ENCODE measurements at regions of chr1 and their contacts with region 1.

Region 1: DNA sequence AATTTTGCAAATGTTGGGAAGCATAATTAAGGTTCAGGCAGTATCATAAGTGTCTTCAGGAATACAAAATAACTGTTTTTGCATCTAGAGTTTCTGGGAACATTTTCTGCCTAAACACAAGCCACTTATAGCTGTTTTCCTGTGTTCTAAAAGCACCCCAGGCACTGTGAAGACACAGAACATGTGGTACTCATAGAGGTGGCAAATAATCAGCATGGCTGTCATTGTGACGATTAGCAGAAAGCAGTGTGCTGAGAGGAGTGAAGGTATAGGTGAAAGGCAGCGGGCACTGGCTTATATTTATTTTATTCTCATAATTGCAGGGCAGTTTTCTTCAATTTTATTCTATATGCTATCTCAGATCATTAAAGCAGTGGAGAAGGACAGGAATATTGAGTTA is 119.6 kb downstream of the LRRC53 start:
- DNase-seq: peak in 2 of 5 donors; percentile 33 to 36
- ATAC-seq: peak; percentile 72 to 84 (median 81)
- H3K4me3 ChIP-seq: no peak overlapping the region
- H3K27ac ChIP-seq: peak overlapping the region in 10 of 12 donors; percentile 18 to 70 (median 60)
- H3K4me1 ChIP-seq: peaks cover 0 to 61% (median 26%) of the 10 kb centered on the region in 12 donors
- H3K27me3 ChIP-seq: no peaks in the 10 kb centered on the region
- CTCF ChIP-seq: no peak
- POLR2A ChIP-seq: no peak

Region 2: DNA sequence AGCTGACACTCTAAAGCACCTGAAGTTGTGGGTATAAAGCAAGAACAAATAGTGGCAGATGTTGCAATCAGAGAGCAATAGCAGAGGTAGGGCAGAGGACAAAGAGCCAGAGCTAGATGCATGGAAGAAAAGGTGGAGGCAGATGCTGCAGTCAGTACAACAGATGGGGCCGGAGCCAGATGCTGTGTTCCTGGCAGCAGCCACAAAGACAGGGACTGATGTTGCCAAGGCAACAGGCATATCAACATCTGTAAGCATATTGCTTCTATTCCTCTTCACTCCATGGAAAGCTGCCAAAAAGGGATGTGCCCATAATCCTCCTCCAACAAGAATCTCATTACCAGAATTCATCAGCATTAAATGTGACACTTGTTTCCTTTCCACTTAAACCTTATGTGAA is 49.6 kb before region 1 on chr1:
- intact Hi-C with region 1: loop called in 1 of 10 experiments (anchors 5 kb)
- DNase-seq: peak in 3 of 5 donors; percentile 24 to 42 (median 24)
- ATAC-seq: peak in 1 of 4 donors; percentile 20
- H3K4me3 ChIP-seq: no peak overlapping the region
- H3K27ac ChIP-seq: peak overlapping the region in 5 of 12 donors; percentile 15 to 81 (median 43)
- H3K4me1 ChIP-seq: peaks cover 0 to 25% (median 4%) of the 10 kb centered on the region in 12 donors
- H3K27me3 ChIP-seq: no peaks in the 10 kb centered on the region
- CTCF ChIP-seq: no peak
- POLR2A ChIP-seq: no peak

Region 3: DNA sequence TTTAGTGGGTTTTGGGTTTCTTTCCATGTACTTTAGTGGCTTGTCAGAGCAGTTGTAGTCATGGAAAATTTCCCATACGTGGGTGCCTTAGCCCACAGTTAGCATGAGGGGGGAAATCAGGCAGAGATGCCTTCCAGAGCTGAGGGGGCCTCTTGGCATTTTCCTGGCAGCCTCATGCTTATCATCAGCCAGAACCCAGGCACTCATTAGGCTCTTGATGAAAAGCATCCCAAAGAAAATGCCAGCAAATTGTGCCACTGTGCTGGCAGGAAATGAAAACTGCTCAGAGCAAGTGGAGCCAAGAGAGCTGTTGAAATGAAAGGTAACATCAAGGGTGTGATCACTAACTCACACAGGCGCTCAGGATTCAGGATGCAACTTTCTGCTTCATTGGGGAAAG is 29.6 kb before region 1 on chr1:
- intact Hi-C with region 1: loop called in 1 of 10 experiments (anchors 2 kb)
- DNase-seq: peak in 4 of 5 donors; percentile 66 to 88 (median 76)
- ATAC-seq: peak; percentile 93 to 97 (median 95)
- H3K4me3 ChIP-seq: no peak overlapping the region
- H3K27ac ChIP-seq: peak overlapping the region in 11 of 12 donors; percentile 33 to 92 (median 75)
- H3K4me1 ChIP-seq: peaks cover 0 to 15% (median 1%) of the 10 kb centered on the region in 12 donors
- H3K27me3 ChIP-seq: no peaks in the 10 kb centered on the region
- CTCF ChIP-seq: no peak
- POLR2A ChIP-seq: no peak

Region 4: DNA sequence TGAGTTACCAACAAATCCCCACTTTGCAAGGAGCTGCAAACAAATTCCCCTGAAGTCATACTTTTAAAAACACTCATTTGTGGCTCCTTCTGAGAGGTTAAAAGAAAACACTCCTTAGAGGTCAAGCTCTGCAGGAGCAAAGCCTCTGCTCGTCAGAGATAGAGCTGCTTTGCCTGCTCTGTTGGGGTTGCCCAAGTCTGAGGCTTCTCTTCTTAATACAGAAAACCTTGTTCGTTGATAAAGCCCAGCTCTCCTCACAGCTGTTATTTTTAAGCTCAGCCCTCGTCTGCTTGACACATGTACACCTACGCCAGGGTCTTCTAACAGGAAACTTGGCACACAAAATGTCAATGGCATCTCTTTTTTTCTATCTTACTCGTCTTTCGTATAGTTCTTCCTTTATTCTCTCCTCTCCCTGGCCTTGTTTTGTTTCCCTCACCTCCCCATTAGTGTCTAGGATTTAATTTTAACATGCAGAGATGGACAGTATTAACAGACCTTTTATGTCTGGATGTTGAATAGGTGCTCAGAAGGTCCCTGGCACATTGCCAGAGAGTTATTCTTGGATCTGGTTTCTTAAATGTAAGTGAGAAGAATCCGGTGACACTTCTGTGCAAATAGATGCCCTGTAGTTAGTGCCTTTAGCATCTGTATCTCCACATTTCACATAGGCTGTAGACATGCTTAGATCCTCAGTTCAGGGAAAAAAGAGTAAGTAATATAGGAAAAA is 33.5 kb after region 1 on chr1:
- intact Hi-C with region 1: loop called in 1 of 10 experiments (anchors 5 kb)
- DNase-seq: no peak
- ATAC-seq: peak; percentile 17 to 53 (median 44)
- H3K4me3 ChIP-seq: no peak overlapping the region
- H3K27ac ChIP-seq: peak overlapping the region; percentile 17 to 78 (median 62)
- H3K4me1 ChIP-seq: peaks cover 0 to 31% (median 5%) of the 10 kb centered on the region in 12 donors
- H3K27me3 ChIP-seq: no peaks in the 10 kb centered on the region
- CTCF ChIP-seq: no peak
- POLR2A ChIP-seq: no peak

Region 5: DNA sequence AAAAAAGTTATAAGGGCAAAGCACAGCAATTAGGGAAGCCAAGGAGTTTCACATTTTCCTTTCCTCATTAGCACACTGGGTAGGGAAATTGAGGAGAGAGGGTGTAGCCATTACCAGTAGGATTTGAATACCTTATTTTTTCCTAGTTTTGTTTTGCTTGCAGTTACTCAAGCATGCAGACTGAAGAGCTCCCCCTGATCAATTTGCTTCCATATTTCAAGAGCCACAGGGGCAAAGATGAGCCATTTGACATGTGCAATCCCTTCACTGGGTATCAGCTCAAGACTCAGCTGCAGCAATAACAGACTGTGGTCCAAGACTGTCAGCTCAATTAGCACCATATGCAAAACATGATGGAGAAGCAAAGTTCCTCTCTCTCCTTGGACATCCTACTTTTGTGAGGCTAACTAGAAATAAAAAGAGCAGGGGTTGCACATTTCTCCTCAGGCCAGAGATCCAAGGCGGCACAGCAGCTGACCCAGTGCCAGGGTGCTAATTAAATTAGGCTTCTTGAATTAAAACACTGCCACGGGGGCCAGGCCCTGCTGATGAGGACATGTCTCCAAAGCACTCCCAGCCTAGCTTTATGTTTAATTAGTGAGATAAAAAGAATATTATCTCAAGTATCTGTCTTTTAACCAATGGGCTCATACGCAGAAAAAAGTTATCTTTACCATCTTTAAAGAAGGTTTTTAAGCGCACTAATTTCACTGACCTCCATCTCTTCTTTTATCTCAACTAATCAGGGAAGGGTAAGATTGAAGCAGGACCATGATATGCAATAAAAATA is 156.3 kb after region 1 on chr1:
- intact Hi-C with region 1: no loop called
- DNase-seq: no peak
- ATAC-seq: no peak
- H3K4me3 ChIP-seq: no peak overlapping the region
- H3K27ac ChIP-seq: no peak overlapping the region
- H3K4me1 ChIP-seq: no peaks in the 10 kb centered on the region
- H3K27me3 ChIP-seq: no peaks in the 10 kb centered on the region
- CTCF ChIP-seq: no peak
- POLR2A ChIP-seq: no peak